Posterior vena cava (tissue), 2 donors: ENCODE measurements at regions of chr3 and their contacts with region 1.

Region 1: GRCh38 chr3:38479431-38480092 is 16.6 kb upstream of the EXOG start:
- DNase-seq: peak; percentile 83

Region 2: DNA sequence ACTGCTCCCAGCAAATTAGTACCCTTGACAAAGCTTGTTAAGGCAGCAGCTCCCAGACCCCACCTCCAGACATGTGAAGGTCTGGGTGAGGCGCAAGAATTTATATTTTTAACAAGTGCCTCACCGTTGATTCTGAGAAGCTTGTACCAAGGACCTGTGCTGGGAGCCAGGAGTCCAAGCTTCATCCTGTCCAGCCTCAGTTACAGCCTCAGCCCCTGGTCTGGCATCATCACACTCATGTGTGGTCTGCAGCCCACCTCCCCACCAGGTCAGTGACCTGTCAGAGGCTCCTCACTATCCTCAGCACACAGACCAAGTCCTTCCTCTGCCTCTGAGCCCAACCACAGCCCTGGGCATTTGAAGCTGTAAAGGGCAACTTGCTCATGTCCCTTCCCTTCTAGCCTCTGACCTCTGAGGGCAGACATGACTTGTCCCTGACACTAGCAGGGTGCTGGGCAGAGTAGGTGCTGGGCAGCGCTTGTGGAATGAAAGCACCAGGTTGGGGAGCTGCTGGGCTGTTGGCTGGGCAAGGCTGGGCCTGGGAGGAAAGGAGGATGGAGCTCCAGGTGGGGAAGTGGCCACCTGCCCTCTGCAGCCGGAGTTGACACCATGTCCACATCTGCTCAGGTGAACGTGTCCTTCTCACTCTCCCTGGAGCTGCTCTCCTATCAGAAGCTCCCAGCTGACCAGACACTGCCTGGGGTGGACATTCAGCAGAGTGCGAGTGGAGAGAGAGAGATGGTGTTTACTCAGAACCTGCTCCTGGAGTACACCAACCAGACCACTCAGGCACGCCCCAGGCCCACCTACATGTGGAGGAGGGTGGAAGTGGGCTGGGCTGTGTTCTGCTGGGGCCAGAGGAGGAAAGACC is 359.5 kb before region 1 on chr3:
- intact Hi-C with region 1: loop called in 1 of 2 experiments (anchors 5 kb)
- DNase-seq: peak; percentile 75

Region 3: GRCh38 chr3:38346587-38347410 is 132.8 kb before region 1 on chr3 and contains the start of gene XYLB:
- intact Hi-C with region 1: loop called (anchors 5 kb)
- DNase-seq: peak; percentile 97
- total RNA-seq, gene XYLB: 4.5 to 6.3 TPM